ENCODE measurements at regions of chr4 and their contacts with region 1.

Region 1: DNA sequence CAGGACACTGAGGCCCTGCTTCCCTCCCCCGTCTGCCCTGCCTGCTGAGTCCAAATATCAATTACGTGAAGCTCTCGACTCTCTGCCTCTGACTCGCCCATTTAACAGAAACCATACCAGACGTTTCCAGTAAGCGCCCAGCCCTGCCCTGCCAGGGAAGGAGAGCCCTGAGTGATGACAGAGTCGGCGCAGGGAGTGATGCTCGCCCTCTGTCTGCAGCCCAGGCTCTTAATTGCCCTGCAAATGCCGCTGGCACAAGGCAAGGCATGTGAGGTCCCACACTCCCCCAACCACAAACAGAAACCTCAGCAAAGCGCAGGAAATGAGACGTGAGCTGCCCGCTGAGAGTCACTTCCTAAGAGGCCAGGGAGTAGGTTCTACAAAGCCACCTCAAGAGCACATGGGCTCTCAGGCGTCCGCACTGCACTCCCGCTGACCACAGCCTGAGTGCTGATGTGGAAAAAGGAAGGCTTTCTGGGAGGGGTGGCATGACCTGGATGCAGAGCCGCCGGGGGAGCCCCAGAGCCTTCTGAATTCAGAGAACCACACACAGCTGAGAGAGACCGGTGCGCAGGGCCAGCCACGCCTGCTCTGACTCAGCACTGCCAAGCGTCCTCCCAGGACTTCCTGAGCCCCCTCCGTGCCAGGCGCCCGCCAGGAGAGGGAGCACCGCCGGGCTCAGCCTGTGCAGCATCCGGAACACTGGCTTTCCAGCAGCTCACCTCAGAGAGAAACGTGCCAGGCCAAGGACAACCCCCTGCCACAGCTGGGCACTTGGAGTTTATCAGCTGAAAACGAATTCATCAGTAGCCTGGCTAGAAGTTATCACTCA is 5.3 kb downstream of the ZFYVE28 start:
- DNase-seq: peak; percentile 94
- H3K4me3 Mint-ChIP-seq: peak overlapping the region; percentile 63
- H3K27ac Mint-ChIP-seq: peak overlapping the region; percentile 96
- H3K4me1 Mint-ChIP-seq: peaks cover 54% of the 10 kb centered on the region
- H3K27me3 Mint-ChIP-seq: peaks cover 15% of the 10 kb centered on the region

Region 2: GRCh38 chr4:1870578-1871443 is 542.3 kb before region 1 on chr4 and contains the start of gene NSD2:
- CTCF ChIA-PET with region 1: no interaction called
- intact Hi-C with region 1: loop called (anchors 2 kb)
- DNase-seq: peak; percentile 90
- H3K4me3 Mint-ChIP-seq: peak within 1 kb of the TSS; percentile 92
- H3K27ac Mint-ChIP-seq: peak within 1 kb of the TSS; percentile 96
- H3K4me1 Mint-ChIP-seq: peaks cover 35% of the 10 kb centered on the region
- H3K27me3 Mint-ChIP-seq: no peaks in the 10 kb centered on the region
- total RNA-seq, gene NSD2: 246 to 250 TPM

Region 3: GRCh38 chr4:2262143-2262943 is 150.8 kb before region 1 on chr4:
- CTCF ChIA-PET with region 1: interaction called, 3 read pairs
- intact Hi-C with region 1: loop called (anchors 1 kb)
- DNase-seq: peak; percentile 98
- H3K4me3 Mint-ChIP-seq: peak overlapping the region; percentile 69
- H3K27ac Mint-ChIP-seq: no peak overlapping the region
- H3K4me1 Mint-ChIP-seq: peaks cover 2% of the 10 kb centered on the region
- H3K27me3 Mint-ChIP-seq: no peaks in the 10 kb centered on the region

Region 4: DNA sequence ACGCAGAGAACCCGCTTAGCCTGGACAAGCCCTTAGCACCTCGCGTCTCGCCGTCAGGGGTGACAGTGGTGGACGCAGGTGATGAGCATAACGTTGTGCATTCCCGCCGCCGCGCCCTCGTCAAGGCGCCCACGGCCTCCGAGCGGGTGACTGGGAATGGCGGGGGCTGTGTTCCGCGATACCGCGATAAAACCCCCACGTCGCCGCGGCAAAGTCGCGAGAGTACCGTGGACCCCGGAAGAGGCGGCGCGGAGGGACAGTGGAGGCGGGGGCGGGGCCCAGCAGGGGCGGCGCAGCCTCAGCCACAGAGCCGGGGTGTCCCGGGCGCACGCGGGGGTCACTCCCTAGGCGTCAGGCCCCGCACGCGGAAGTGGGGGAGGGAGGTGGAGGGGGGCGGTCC is 48.4 kb before region 1 on chr4:
- CTCF ChIA-PET with region 1: no interaction called
- intact Hi-C with region 1: loop called (anchors 2 kb)
- DNase-seq: peak; percentile 72
- H3K4me3 Mint-ChIP-seq: peak overlapping the region; percentile 70
- H3K27ac Mint-ChIP-seq: peak overlapping the region; percentile 24
- H3K4me1 Mint-ChIP-seq: peaks cover 9% of the 10 kb centered on the region
- H3K27me3 Mint-ChIP-seq: no peaks in the 10 kb centered on the region

Region 5: DNA sequence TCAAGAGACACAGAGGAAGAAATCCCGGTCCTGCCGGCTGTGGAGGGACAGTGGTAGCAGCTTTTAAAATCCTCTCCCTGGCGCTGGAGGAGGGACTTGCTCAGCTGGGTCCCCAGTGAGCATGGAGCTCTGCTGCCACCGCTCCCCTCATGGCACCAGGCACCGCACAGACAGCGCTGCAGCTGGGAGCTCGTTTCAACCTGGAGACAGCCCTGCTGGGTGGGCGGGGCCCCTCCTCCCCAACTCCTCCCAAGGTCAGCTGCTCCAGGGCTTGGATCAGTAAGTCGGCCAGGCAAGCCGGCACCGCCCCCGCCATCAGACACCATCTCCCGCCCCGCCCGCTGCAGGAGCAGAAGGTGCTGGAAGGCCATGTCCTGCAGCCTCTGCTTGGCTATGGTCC is 11.1 kb before region 1 on chr4:
- CTCF ChIA-PET with region 1: interaction called, 5 read pairs
- intact Hi-C with region 1: loop called (anchors 1 kb)
- DNase-seq: peak; percentile 48
- H3K4me3 Mint-ChIP-seq: peak overlapping the region; percentile 55
- H3K27ac Mint-ChIP-seq: no peak overlapping the region
- H3K4me1 Mint-ChIP-seq: peaks cover 17% of the 10 kb centered on the region
- H3K27me3 Mint-ChIP-seq: no peaks in the 10 kb centered on the region